Left cardiac atrium (tissue), 4 donors: ENCODE measurements at regions of chr1 and their contacts with region 1.

Region 1: GRCh38 chr1:174982971-174983689 is 16.6 kb upstream of the CACYBP start:
- DNase-seq: no peak
- ATAC-seq: no peak

Region 2: GRCh38 chr1:174769961-174770549 is 213.1 kb before region 1 on chr1:
- intact Hi-C with region 1: loop called (anchors 5 to 10 kb)
- DNase-seq: no peak
- ATAC-seq: peak in 1 of 2 donors; percentile 41

Region 3: DNA sequence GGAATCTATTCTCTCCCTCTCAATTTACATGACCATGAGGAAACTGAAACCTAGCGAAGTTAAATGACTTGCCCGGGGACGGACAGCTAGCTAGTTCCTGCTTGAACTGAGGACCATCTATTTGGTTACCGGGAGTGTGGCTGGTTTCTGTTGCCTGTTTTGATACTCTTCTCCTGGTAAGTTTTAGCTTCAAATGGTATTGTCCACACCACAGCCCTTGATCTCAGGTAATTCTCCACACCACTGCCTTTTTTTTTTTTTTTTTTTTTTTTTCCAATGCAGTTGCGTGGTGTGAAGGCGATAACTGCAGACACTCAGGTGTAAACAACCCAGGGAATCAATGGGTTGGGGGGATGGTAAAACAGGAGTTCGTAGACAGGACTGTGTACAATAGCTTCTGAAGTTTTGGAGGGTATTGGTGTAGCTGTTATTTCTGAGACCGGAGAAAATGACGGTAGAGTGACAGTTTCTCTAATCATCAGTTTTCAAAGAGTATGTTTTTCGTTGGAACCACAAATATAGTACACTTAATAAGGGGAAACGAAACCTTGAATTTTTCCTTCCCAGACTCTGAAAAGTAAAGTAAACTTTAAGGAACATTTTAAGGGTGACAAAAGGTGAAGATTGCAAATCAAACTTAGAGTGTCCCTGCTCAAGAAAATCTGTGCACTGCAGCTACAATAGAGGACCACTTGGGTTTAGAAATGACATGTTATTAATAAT is 108.6 kb before region 1 on chr1:
- intact Hi-C with region 1: loop called in 1 of 2 experiments (anchors 10 kb)
- DNase-seq: no peak
- ATAC-seq: peak in 1 of 2 donors; percentile 25

Region 4: DNA sequence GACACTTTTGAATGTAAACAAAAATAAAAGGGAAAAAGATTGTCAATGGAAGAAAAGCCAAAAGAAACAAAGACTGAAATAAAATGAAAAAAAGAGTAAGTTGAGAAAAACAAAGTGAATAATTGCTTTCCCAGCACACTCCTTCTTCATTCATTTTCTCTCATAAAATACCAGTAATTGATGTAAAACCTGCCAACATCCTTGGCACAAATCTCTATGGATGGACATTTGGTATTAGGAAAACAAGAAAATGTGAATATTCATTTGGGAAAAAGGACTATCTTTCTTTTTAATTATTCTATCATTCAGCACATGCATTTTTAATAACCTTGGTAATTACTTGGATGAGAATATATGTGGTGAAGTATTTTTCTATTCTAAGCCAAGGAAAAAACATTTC is 964.6 kb after region 1 on chr1:
- intact Hi-C with region 1: no loop called
- DNase-seq: no peak
- ATAC-seq: no peak